ENCODE measurements at regions of chr22 and their contacts with region 1.

Region 1: GRCh38 chr22:30902496-30903357 is 65.8 kb downstream of the MORC2 start:
- DNase-seq: no peak
- H3K4me3 ChIP-seq: no peak overlapping the region
- H3K27ac ChIP-seq: no peak overlapping the region
- H3K4me1 ChIP-seq: no peaks in the 10 kb centered on the region
- H3K27me3 ChIP-seq: no peaks in the 10 kb centered on the region
- CTCF ChIP-seq: no peak

Region 2: GRCh38 chr22:30628491-30628890 is 274.2 kb before region 1 on chr22:
- intact Hi-C with region 1: loop called (anchors 10 kb)
- DNase-seq: no peak
- H3K4me3 ChIP-seq: no peak overlapping the region
- H3K27ac ChIP-seq: no peak overlapping the region
- H3K4me1 ChIP-seq: no peaks in the 10 kb centered on the region
- H3K27me3 ChIP-seq: no peaks in the 10 kb centered on the region
- CTCF ChIP-seq: no peak

Measured in colonic mucosa (tissue), 4 donors.